OCI-LY7 (cell line): ENCODE measurements at regions of chr18 and their contacts with region 1.

Region 1: DNA sequence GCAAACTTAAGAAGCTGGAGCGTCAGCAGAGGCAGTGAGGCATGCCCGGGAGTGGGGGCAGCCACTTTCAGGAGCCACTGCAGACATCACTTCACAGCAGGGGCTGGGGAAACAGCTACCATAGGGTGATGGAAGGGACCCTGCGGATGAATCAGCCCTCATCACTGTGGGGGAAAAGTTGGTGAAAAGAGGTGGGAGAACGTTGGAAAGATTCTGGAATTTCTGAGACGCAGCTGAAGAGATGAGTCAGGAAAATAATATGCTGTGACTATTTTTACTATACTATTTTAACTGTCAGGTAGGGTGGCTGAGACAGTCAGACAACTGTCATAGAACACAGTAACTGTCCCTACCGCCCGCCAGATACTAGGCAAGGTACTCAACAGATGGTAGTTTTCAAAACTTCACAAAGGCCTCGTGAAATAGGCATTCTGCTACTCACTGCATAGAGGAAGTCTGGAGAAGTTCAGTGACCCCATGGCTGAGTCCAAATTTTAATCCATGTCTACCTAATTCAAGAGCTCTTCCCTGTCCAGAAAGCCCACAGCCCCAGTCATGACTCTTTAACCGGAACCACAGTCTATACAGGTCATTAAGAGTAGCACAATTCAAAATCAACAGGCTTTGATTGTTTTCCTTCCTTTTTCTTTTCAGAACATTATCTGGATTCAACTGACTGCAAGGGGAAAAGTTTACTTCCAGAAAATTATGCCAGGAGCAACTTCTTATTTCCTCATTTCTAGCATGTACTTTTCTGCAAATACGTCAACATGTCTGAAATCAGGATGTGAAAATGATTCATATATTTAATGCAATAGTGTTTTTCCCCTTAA is 39.3 kb upstream of the EPB41L3 start:
- DNase-seq: no peak
- H3K4me3 ChIP-seq: no peak overlapping the region
- H3K27ac ChIP-seq: no peak overlapping the region
- H3K4me1 ChIP-seq: no peaks in the 10 kb centered on the region
- CTCF ChIP-seq: no peak

Region 2: DNA sequence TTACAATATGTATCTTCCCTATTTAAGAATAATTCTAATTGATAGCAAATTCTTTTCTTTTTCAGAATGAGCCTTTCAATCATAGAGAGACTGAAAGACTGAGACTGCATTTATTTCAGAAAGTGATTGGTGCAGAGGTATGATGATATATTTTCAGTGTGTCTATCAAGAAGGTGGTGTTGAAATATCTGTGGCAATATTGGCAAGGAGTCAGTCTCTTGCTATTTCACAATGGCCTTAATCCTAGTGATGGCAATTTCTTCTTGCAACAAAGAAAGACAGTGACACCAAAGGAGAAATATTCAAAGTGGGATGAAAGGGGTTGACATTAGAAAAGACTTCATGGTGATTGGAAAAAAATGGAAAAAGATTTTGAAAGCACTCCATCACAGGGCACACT is 265.9 kb before region 1 on chr18:
- CTCF ChIA-PET with region 1: no interaction called
- POLR2A ChIA-PET with region 1: no interaction called
- intact Hi-C with region 1: no loop called
- DNase-seq: no peak
- H3K4me3 ChIP-seq: no peak overlapping the region
- H3K27ac ChIP-seq: no peak overlapping the region
- H3K4me1 ChIP-seq: no peaks in the 10 kb centered on the region
- CTCF ChIP-seq: no peak

Region 3: GRCh38 chr18:5417342-5417741 is 165.7 kb before region 1 on chr18:
- CTCF ChIA-PET with region 1: no interaction called
- POLR2A ChIA-PET with region 1: no interaction called
- intact Hi-C with region 1: no loop called
- DNase-seq: peak; percentile 14
- H3K4me3 ChIP-seq: no peak overlapping the region
- H3K27ac ChIP-seq: no peak overlapping the region
- H3K4me1 ChIP-seq: peaks cover 16% of the 10 kb centered on the region
- CTCF ChIP-seq: no peak

Region 4: GRCh38 chr18:5527603-5528002 is 55.5 kb before region 1 on chr18:
- CTCF ChIA-PET with region 1: no interaction called
- POLR2A ChIA-PET with region 1: no interaction called
- intact Hi-C with region 1: loop called (anchors 10 kb)
- DNase-seq: no peak
- H3K4me3 ChIP-seq: no peak overlapping the region
- H3K27ac ChIP-seq: no peak overlapping the region
- H3K4me1 ChIP-seq: no peaks in the 10 kb centered on the region
- CTCF ChIP-seq: no peak

Region 5: DNA sequence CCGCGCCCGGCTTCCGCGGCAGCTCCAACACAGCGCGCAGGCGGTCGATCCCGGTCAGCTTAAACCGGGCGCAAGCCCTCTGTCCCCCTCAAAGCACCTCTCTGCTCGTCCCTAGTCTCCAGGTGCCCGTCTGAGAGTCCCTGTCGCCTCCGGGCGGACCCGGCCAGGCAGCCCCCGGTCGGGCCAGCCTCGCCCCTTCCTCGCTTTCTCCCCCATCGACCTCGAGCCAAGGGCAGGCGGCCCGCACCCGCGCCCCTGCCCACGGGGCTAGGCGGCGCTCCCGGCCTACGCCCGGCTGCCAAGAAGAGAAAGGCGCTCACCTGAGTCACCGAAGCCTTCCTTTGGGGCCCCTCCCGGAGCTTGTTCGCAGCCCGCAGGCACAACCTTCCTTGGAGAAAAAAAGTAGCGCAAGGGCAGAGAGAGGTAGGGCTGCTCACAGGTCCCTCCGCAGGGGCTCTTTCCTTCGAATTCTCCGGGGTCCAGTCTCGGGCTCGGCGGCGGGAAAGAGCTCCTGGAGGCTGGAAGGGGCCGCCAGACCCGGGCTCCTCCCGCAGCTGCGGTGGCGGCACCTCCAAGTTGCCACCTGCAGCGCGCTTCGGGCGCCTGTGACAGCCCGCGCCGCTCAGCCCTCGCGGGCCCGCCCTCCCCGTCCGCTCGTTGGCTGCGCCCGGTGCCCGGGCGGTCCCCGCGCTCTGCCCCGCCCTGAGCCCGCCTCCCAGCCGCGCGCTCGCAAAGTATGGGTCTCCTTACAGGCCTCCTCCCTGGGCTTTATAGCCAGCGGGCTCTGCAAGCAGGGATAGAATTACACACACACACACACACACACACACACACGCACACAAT is 47.2 kb after region 1 on chr18:
- CTCF ChIA-PET with region 1: no interaction called
- POLR2A ChIA-PET with region 1: no interaction called
- intact Hi-C with region 1: no loop called
- DNase-seq: no peak
- H3K4me3 ChIP-seq: no peak overlapping the region
- H3K27ac ChIP-seq: no peak overlapping the region
- H3K4me1 ChIP-seq: no peaks in the 10 kb centered on the region
- CTCF ChIP-seq: no peak